ENCODE measurements at regions of chr19 and their contacts with region 1.

Region 1: DNA sequence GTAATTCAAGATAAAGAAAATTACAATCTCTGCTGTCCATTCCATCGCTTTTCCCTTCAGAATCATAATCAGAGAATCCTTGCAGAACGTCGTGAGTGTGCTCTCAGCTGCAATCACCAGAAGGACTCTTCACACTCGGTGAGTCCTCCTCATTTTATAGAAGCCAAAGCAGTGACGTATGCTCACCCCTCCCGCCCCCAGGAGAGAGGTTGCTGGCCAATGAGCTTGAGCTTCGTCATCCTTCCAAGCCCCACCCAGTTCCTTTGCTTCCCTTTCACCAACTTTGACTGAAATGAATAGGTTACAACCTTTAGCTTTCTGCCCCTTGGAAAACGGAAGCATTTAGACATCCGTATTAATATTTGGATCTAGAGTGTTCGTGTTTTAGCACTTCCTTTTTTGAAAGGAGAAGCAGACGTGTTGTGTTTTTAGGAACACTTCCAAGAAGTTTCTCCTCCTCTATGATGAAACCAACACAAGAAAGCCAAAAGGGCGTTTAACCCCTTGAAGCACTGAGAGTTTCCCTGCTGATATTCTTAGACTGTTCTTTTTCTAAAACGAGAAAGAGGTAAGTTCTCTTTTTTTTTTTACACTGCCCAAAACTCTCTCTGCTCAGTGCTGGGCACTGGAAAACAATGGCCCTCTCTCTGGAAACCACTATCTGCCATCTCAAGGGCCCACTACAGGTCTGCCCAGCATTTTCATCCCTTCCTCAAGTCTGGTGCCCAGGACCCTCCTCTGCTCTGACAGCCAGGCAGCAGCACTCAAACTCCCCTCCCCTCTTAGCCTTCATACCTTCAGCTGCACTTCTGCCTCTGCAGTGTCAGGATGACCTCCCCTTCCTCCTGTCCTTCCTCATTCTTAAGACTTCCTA is 44.3 kb upstream of the CEACAM21 start:
- DNase-seq: peak; percentile 86
- H3K4me3 Mint-ChIP-seq: peak overlapping the region; percentile 68
- H3K27ac Mint-ChIP-seq: peak overlapping the region; percentile 71
- H3K4me1 Mint-ChIP-seq: peaks cover 69% of the 10 kb centered on the region
- H3K27me3 Mint-ChIP-seq: peaks cover 17% of the 10 kb centered on the region

Region 2: GRCh38 chr19:41439441-41440222 is 92.0 kb before region 1 on chr19 and contains the start of gene DMAC2:
- CTCF ChIA-PET with region 1: interaction called, 12 read pairs
- POLR2A ChIA-PET with region 1: interaction called, 8 read pairs
- DNase-seq: peak; percentile 98
- H3K4me3 Mint-ChIP-seq: no peak within 1 kb of the TSS
- H3K27ac Mint-ChIP-seq: no peak within 1 kb of the TSS
- H3K4me1 Mint-ChIP-seq: peaks cover 14% of the 10 kb centered on the region
- H3K27me3 Mint-ChIP-seq: peaks cover 9% of the 10 kb centered on the region
- total RNA-seq, gene DMAC2: 36.0 to 38.4 TPM

Region 3: DNA sequence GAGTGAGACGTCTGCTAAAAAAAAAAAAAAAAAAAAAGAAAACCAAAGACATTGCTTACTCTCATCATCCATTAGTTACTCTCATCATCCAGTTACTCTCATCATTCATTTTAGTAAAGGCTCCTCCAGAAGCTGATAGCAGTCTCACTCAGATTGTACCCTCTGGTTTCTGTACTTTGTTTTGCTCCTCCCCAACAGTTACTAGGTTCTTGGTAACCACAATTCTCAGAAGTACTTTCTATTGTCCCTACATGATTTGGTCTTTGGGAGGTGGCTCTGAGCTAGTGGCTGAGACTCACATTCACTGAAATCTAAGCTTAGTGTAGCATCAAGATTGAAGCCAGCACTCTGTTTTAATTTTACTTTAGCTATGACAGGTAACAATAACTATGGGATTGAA is 74.4 kb before region 1 on chr19:
- CTCF ChIA-PET with region 1: interaction called, 15 read pairs
- POLR2A ChIA-PET with region 1: interaction called, 12 read pairs
- DNase-seq: no peak
- H3K4me3 Mint-ChIP-seq: peak overlapping the region; percentile 45
- H3K27ac Mint-ChIP-seq: peak overlapping the region; percentile 78
- H3K4me1 Mint-ChIP-seq: peaks cover 45% of the 10 kb centered on the region
- H3K27me3 Mint-ChIP-seq: peaks cover 3% of the 10 kb centered on the region

Region 4: GRCh38 chr19:41510484-41510883 is 21.2 kb before region 1 on chr19:
- CTCF ChIA-PET with region 1: no interaction called
- POLR2A ChIA-PET with region 1: no interaction called
- DNase-seq: no peak
- H3K4me3 Mint-ChIP-seq: no peak overlapping the region
- H3K27ac Mint-ChIP-seq: no peak overlapping the region
- H3K4me1 Mint-ChIP-seq: no peaks in the 10 kb centered on the region
- H3K27me3 Mint-ChIP-seq: peaks cover 26% of the 10 kb centered on the region

Region 5: DNA sequence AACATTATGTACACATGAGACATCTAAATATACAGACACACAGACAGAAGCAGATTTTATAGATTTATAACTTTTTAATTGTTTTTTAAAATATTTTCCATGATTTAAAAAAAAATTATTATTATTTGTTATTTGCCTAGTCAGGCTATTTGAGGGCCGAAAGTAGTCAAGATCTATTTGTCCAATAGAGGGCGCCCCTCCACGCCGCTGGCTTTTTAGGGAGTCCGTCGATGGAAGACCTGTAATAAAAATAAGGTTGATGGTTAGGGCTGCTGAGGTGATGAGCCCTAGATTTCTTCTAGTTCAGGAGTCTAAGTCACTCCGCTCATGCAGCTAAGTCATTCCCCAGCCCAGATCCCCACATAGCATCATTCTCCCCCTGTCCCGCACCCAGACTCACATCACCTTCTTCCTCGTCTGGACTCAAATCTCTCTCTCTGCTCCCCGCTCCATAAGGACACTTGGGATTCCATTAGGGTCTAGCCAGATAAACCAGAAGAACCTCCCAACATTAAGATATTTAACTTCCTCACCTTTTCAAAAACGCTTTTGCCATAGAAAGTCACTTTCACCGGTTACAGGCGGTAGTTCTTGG is 10.4 kb after region 1 on chr19:
- CTCF ChIA-PET with region 1: interaction called, 10 read pairs
- POLR2A ChIA-PET with region 1: interaction called, 18 read pairs
- DNase-seq: peak; percentile 86
- H3K4me3 Mint-ChIP-seq: peak overlapping the region; percentile 18
- H3K27ac Mint-ChIP-seq: peak overlapping the region; percentile 8
- H3K4me1 Mint-ChIP-seq: peaks cover 58% of the 10 kb centered on the region
- H3K27me3 Mint-ChIP-seq: no peaks in the 10 kb centered on the region

Region 6: DNA sequence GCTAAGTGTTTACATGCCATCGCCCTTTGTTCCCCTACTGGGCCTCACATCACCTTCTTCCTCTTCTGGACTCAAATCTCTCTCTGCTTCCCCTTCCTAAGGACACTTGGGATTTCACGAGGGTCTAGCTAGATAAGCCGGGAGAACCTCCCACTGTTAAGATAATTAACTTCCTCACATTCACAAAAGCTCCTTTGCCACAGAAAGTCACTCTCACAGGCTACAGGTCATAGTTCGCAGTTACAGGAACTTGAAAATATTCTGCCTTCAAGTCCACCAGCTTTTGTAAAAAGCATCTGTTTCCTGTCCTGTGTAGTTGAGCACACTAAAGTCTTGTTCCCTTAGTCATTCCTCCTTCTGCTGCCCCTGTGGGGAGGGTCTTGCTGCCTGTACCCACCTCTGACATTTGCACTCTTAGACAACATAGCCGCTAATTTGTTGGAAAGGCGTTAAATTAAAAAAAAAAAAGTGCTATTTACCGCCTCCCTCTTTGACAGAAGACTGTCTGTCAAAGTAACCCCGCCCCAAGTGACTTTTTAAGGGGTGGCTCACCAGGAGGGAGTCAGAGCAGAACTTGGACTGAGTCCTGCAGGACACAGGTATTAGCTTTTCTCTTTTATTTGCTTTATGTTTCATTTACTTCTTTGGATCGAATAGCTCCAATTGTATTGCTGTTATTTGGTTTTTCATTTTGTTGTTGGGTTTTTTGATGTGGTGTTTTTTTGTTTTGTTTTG is 17.4 kb after region 1 on chr19:
- CTCF ChIA-PET with region 1: interaction called, 8 read pairs
- POLR2A ChIA-PET with region 1: interaction called, 22 read pairs
- DNase-seq: peak; percentile 88
- H3K4me3 Mint-ChIP-seq: peak overlapping the region; percentile 99
- H3K27ac Mint-ChIP-seq: peak overlapping the region; percentile 99
- H3K4me1 Mint-ChIP-seq: peaks cover 62% of the 10 kb centered on the region
- H3K27me3 Mint-ChIP-seq: no peaks in the 10 kb centered on the region

Region 7: DNA sequence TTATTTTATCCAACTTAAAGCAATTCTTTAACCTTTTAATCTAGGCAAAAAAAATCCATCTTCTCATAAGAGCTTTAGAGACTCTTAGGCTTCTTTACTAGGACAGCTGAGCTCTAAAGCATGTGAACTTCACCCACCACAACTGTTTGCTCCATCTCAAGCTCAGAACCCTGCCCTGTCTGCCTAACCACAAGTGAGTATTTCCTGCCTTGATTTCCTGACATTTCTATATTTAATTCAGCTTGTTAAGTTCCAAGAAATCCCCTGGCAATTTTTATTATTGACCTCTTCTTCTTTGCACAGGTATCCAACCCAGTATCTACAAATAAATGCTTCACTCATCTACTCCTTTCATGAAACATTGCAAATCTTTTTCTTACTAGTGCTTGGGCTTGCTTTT is 23.2 kb after region 1 on chr19:
- CTCF ChIA-PET with region 1: interaction called, 8 read pairs
- POLR2A ChIA-PET with region 1: interaction called, 22 read pairs
- DNase-seq: peak; percentile 64
- H3K4me3 Mint-ChIP-seq: peak overlapping the region; percentile 58
- H3K27ac Mint-ChIP-seq: peak overlapping the region; percentile 99
- H3K4me1 Mint-ChIP-seq: peaks cover 68% of the 10 kb centered on the region
- H3K27me3 Mint-ChIP-seq: no peaks in the 10 kb centered on the region

Measured in activated CD4-positive, alpha-beta memory T cell treated with anti-CD3 and anti-CD28 coated beads, Interleukin-2, amount 10 ng/mL, durations not matched to agents 7 days and 5 days (primary cell).